ENCODE measurements at regions of chr5 and their contacts with region 1.

Region 1: GRCh38 chr5:39217365-39218281 is 1.7 kb downstream of the FYB1 start:
- DNase-seq: peak; percentile 57
- H3K4me3 ChIP-seq: no peak overlapping the region
- H3K27ac ChIP-seq: no peak overlapping the region
- H3K27me3 ChIP-seq: no peaks in the 10 kb centered on the region
- CTCF ChIP-seq: peak; percentile 98

Region 2: GRCh38 chr5:37370864-37371726 is 1846.5 kb before region 1 on chr5 and contains the start of gene NUP155:
- CTCF ChIA-PET with region 1: no interaction called
- POLR2A ChIA-PET with region 1: no interaction called
- DNase-seq: peak; percentile 84
- H3K4me3 ChIP-seq: peak within 1 kb of the TSS; percentile 99
- H3K27ac ChIP-seq: peak within 1 kb of the TSS; percentile 39
- H3K27me3 ChIP-seq: no peaks in the 10 kb centered on the region
- CTCF ChIP-seq: no peak
- polyA plus RNA-seq, gene NUP155: 15.1 and 18.5 TPM in 2 replicates

Region 3: DNA sequence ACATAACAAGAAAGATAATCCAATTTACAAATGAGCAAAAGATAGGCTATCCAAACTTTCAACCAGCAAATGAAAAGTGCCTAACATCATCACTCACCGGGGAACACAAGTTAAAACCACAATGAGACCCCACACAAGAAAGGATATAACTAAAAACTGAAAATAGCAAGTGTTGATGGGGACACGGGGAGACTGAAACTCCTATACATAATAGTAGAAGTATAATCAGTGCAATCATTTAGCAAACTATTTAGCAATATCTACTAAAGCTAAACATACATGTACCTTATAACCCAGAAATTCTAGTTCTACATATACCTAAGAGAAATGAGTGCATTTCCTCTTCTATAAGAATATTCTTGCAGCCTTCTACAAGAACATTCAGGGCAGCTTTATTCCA is 215.9 kb before region 1 on chr5:
- CTCF ChIA-PET with region 1: no interaction called
- POLR2A ChIA-PET with region 1: no interaction called
- DNase-seq: no peak
- H3K4me3 ChIP-seq: no peak overlapping the region
- H3K27ac ChIP-seq: no peak overlapping the region
- H3K27me3 ChIP-seq: no peaks in the 10 kb centered on the region
- CTCF ChIP-seq: no peak

Region 4: GRCh38 chr5:39194466-39195136 is 23.0 kb before region 1 on chr5:
- CTCF ChIA-PET with region 1: interaction called, 29 read pairs
- POLR2A ChIA-PET with region 1: no interaction called
- DNase-seq: peak; percentile 46
- H3K4me3 ChIP-seq: no peak overlapping the region
- H3K27ac ChIP-seq: no peak overlapping the region
- H3K27me3 ChIP-seq: no peaks in the 10 kb centered on the region
- CTCF ChIP-seq: no peak

Region 5: GRCh38 chr5:39231705-39232525 is 14.3 kb after region 1 on chr5:
- CTCF ChIA-PET with region 1: interaction called, 33 read pairs
- POLR2A ChIA-PET with region 1: no interaction called
- DNase-seq: no peak
- H3K4me3 ChIP-seq: no peak overlapping the region
- H3K27ac ChIP-seq: no peak overlapping the region
- H3K27me3 ChIP-seq: no peaks in the 10 kb centered on the region
- CTCF ChIP-seq: no peak

Region 6: GRCh38 chr5:39256477-39257235 is 39.0 kb after region 1 on chr5:
- CTCF ChIA-PET with region 1: interaction called, 10 read pairs
- POLR2A ChIA-PET with region 1: no interaction called
- DNase-seq: peak; percentile 55
- H3K4me3 ChIP-seq: no peak overlapping the region
- H3K27ac ChIP-seq: no peak overlapping the region
- H3K27me3 ChIP-seq: no peaks in the 10 kb centered on the region
- CTCF ChIP-seq: no peak

Region 7: DNA sequence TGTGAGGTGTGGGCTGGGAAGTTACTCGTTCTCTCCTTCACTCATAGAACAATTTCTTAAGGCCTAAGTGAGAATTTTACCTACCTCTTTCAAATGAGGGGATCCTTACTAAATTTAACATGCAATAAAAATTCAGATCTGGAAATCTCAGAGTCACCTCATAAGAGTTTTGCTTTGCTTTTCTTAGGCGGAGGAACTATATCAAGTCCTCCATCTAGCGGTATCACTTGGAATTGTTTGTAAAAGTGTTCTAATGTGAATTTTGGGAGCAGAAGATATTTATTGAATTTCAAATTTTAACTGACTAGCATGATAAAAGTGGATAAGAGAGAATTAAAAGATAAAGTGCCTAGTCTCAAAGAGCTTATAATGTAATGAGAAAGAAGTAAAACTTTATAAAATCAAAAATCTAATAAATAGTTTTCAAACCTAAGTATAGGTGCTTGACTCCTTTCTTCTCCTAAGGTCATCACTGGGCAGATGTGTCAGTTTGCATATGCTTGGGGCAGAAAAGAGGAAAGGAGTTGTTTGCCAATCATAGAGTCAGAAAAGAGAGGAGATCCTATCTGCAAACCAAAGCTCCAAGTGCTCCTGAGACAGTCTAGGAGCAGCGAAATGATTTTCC is 352.9 kb after region 1 on chr5:
- CTCF ChIA-PET with region 1: interaction called, 74 read pairs
- POLR2A ChIA-PET with region 1: no interaction called
- DNase-seq: no peak
- H3K4me3 ChIP-seq: no peak overlapping the region
- H3K27ac ChIP-seq: no peak overlapping the region
- H3K27me3 ChIP-seq: peaks cover 6% of the 10 kb centered on the region
- CTCF ChIP-seq: peak; percentile 78